ENCODE measurements at regions of chr5 and their contacts with region 1.

Region 1: DNA sequence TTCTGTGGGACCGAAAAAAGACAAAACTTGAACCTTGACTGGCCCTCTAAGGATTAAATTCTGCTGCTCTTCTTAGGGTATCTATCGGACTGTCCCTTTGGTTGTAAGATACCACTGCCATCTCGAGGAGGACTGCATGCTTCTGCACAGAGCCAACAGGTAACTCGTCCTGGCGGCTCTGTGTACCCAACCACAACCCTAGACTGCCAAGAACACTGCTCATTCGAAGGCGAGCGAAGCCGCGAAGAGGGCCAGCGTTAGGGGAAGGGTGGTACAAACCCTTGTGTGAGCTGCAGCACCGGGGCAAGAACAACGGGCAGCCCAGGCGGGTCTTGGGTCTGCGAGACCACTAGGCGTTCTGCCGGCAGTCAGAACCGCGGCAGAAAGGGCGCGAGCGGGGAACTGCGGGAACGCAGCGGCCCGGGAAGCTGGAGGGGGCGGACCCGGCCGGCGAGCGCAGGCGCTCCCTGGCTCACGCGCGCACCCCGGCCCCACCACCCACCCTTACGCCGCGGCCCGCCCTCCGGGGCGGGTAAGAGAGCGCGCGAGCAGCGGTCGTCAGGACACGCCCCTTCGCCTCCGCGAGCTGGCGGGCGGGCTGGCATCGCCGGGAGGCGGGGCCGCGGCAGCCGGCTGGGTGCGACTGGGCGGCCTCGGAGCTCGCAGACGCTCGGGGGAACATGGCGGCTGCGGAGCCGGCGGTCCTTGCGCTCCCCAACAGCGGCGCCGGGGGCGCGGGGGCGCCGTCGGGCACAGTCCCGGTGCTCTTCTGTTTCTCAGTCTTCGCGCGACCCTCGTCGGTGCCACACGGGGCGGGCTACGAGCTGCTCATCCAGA is at the start of gene ISOC1:
- DNase-seq: peak; percentile 93
- ATAC-seq: peak; percentile 92
- H3K4me3 ChIP-seq: peak within 1 kb of the TSS; percentile 71 to 92 (median 82)
- H3K4me3 Mint-ChIP-seq: peak within 1 kb of the TSS; percentile 92
- H3K27ac ChIP-seq: peak within 1 kb of the TSS; percentile 54 to 68
- H3K27ac Mint-ChIP-seq: peak within 1 kb of the TSS; percentile 91
- H3K4me1 ChIP-seq: peaks cover 10 to 13% of the 10 kb centered on the region in 2 donors
- H3K4me1 Mint-ChIP-seq: peaks cover 19% of the 10 kb centered on the region
- H3K27me3 ChIP-seq: peaks cover 0 to 9% (median 4%) of the 10 kb centered on the region in 4 experiments
- H3K27me3 Mint-ChIP-seq: peaks cover 26% of the 10 kb centered on the region
- CTCF ChIP-seq: peak; percentile 35
- total RNA-seq, gene ISOC1: 10.3 and 10.6 TPM in 2 replicates

Region 2: DNA sequence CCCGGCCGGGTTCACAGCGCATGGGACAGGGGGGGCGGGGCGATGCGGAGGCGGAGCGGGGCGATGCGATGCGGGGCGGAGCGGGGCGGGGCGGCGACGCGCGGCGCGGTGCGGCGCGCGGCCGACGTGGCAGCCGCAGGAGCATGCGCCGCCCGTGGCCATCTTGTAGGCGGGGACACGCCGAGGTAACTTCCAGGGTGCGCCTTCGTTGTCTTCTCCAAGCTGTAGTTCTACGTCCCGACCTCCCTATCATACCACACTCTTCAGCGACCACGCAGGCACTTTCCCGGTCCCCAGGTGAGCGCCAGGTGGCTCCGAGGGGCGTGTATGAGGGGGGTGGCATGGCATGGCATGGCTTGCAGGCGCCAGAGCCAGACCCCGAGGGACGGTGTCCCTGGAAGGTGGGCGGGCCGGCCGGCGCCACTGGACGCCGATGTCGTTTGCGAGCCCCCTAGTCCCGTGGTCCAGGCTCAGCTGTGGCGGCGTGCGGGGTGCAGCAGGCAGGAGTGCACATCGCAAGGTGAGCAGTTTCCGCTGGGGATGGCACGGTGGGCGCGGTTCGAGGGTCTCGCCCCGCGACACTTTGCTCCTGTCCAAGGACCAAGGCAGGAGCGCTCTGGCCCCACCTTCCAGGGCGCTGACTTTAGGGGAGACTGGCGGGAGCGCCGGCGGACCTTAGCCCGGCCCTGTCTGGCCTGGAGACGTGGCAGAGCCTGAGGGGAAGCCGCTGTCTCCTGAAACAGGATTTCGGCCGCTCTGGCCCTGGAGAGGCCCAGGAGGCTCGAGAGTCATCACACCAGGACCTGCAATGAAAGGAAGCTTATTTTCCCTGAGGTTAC is 1576.6 kb before region 1 on chr5 and contains the start of gene PRRC1:
- CTCF ChIA-PET with region 1: no interaction called
- POLR2A ChIA-PET with region 1: no interaction called
- intact Hi-C with region 1: loop called (anchors 5 kb)
- DNase-seq: peak; percentile 86
- ATAC-seq: peak; percentile 96
- H3K4me3 ChIP-seq: peak within 1 kb of the TSS; percentile 85 to 99 (median 98)
- H3K4me3 Mint-ChIP-seq: peak within 1 kb of the TSS; percentile 93
- H3K27ac ChIP-seq: peak within 1 kb of the TSS; percentile 67 to 85
- H3K27ac Mint-ChIP-seq: peak within 1 kb of the TSS; percentile 79
- H3K4me1 ChIP-seq: peaks cover 12% of the 10 kb centered on the region in 2 donors
- H3K4me1 Mint-ChIP-seq: peaks cover 26% of the 10 kb centered on the region
- H3K27me3 ChIP-seq: no peaks in the 10 kb centered on the region
- H3K27me3 Mint-ChIP-seq: peaks cover 4% of the 10 kb centered on the region
- CTCF ChIP-seq: no peak
- total RNA-seq, gene PRRC1: 33.7 and 35.5 TPM in 2 replicates

Measured in B cell (primary cell).